ENCODE measurements at regions of chr17 and their contacts with region 1.

Region 1: GRCh38 chr17:62870030-62870541 is 62.0 kb upstream of the MARCHF10 start:
- DNase-seq: no peak
- ATAC-seq: no peak
- H3K4me3 ChIP-seq: no peak overlapping the region
- H3K27ac ChIP-seq: no peak overlapping the region
- H3K4me1 ChIP-seq: no peaks in the 10 kb centered on the region
- H3K27me3 ChIP-seq: no peaks in the 10 kb centered on the region
- CTCF ChIP-seq: no peak
- POLR2A ChIP-seq: no peak

Region 2: GRCh38 chr17:62911114-62911513 is 41.0 kb after region 1 on chr17:
- in situ Hi-C with region 1: no loop called
- intact Hi-C with region 1: no loop called
- DNase-seq: no peak
- ATAC-seq: no peak
- H3K4me3 ChIP-seq: no peak overlapping the region
- H3K27ac ChIP-seq: no peak overlapping the region
- H3K4me1 ChIP-seq: no peaks in the 10 kb centered on the region
- H3K27me3 ChIP-seq: no peaks in the 10 kb centered on the region
- CTCF ChIP-seq: no peak
- POLR2A ChIP-seq: no peak

Region 3: DNA sequence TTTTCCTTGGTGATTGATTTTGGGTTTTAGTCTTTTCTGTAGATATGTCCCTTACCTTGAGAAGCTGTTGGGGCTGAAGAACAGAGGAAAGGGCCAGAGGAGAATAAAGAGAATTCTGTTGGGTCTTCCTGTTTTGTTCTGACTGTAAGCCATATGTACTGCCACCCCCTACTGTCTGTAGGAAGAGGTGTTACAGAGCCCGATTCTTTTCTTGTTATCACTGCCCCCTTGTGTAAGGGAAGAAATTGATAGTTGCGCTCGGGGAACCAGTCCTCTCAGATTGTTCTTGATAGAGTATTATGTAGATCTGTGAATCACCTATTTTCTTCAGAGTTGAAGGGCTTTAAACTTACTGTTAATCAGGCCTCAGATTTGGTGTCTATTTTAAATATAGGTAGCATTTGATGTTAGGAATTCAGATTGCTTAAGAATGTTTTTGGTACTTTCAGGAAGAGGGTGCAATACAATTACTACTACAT is 98.4 kb after region 1 on chr17:
- in situ Hi-C with region 1: loop called in 1 of 4 experiments (anchors 25 kb)
- intact Hi-C with region 1: no loop called
- DNase-seq: no peak
- ATAC-seq: no peak
- H3K4me3 ChIP-seq: no peak overlapping the region
- H3K27ac ChIP-seq: no peak overlapping the region
- H3K4me1 ChIP-seq: peaks cover 7 to 12% of the 10 kb centered on the region in 2 donors
- H3K27me3 ChIP-seq: no peaks in the 10 kb centered on the region
- CTCF ChIP-seq: peak; percentile 22 to 62 (median 47)
- POLR2A ChIP-seq: no peak